Gastrocnemius medialis (tissue), 4 donors: ENCODE measurements at regions of chr6 and their contacts with region 1.

Region 1: GRCh38 chr6:154822947-154823558 is 89.8 kb downstream of the SCAF8 start:
- DNase-seq: peak in 1 of 2 donors; percentile 39
- ATAC-seq: peak; percentile 92 to 99
- H3K4me3 ChIP-seq: no peak overlapping the region
- H3K27ac ChIP-seq: peak overlapping the region; percentile 70 to 79 (median 76)
- H3K4me1 ChIP-seq: peaks cover 30 to 36% of the 10 kb centered on the region in 2 donors
- H3K27me3 ChIP-seq: no peaks in the 10 kb centered on the region
- CTCF ChIP-seq: no peak
- POLR2A ChIP-seq: no peak

Region 2: DNA sequence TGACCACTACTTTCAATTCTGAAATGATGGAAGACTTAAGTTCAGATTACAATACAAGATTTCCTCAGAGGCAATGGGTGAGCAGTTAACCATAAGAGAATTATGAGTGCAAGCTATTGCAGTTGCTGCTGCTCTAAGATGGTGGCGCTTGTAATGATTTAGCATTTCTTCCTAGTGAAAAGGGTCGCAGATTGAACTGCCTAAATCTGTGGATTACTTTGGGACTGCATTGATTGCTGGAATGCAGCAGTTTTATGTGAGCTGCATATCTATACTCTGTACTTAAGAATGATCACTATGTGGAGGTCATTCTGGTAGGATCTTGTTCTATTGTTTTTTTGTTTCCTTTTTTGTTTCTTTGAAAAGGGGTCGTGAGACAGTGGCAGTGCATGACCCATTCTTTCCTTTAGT is 84.5 kb before region 1 on chr6:
- in situ Hi-C with region 1: no loop called
- intact Hi-C with region 1: no loop called
- DNase-seq: no peak
- ATAC-seq: peak in 1 of 2 donors; percentile 46
- H3K4me3 ChIP-seq: no peak overlapping the region
- H3K27ac ChIP-seq: peak overlapping the region in 3 of 4 donors; percentile 52 to 99 (median 53)
- H3K4me1 ChIP-seq: peaks cover 85 to 86% of the 10 kb centered on the region in 2 donors
- H3K27me3 ChIP-seq: no peaks in the 10 kb centered on the region
- CTCF ChIP-seq: no peak
- POLR2A ChIP-seq: no peak

Region 3: GRCh38 chr6:154805288-154805911 is 17.7 kb before region 1 on chr6:
- in situ Hi-C with region 1: no loop called
- intact Hi-C with region 1: loop called (anchors 1 kb)
- DNase-seq: no peak
- ATAC-seq: peak in 1 of 2 donors; percentile 56
- H3K4me3 ChIP-seq: no peak overlapping the region
- H3K27ac ChIP-seq: no peak overlapping the region
- H3K4me1 ChIP-seq: peaks cover 5 to 14% of the 10 kb centered on the region in 2 donors
- H3K27me3 ChIP-seq: no peaks in the 10 kb centered on the region
- CTCF ChIP-seq: peak in 4 of 5 experiments; percentile 21 to 63 (median 49)
- POLR2A ChIP-seq: no peak

Region 4: DNA sequence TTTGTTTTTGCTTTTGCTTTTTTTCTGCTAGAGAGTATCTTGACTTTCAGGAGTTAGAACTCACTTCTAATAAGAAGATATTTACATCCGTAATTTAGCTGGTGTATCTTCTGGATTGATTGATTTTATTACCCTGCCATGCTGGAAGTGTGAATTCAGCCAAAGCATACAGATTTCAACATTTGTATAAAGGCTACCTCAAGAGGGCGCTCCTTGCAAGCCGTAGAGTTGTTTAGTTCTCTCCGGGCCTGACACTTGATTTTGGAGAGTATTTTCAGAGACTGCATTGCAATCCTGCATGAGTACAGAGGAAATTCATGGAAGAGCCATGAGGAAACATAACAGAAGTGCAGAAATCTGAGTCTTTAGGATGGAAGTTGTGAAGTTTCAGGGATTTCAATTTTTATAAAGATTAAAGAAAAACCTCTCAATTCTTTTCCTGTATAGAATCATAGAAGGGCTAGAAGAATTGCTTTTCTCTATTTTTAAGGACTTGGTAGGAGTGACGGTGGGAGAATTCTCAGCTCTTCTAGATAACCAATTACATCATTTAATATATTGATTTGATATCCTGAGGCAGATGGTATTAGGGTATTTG is 105.4 kb after region 1 on chr6:
- in situ Hi-C with region 1: no loop called
- intact Hi-C with region 1: no loop called
- DNase-seq: no peak
- ATAC-seq: peak in 1 of 2 donors; percentile 68
- H3K4me3 ChIP-seq: no peak overlapping the region
- H3K27ac ChIP-seq: no peak overlapping the region
- H3K4me1 ChIP-seq: peaks cover 0 to 8% of the 10 kb centered on the region in 2 donors
- H3K27me3 ChIP-seq: no peaks in the 10 kb centered on the region
- CTCF ChIP-seq: peak; percentile 41 to 77 (median 55)
- POLR2A ChIP-seq: no peak

Region 5: DNA sequence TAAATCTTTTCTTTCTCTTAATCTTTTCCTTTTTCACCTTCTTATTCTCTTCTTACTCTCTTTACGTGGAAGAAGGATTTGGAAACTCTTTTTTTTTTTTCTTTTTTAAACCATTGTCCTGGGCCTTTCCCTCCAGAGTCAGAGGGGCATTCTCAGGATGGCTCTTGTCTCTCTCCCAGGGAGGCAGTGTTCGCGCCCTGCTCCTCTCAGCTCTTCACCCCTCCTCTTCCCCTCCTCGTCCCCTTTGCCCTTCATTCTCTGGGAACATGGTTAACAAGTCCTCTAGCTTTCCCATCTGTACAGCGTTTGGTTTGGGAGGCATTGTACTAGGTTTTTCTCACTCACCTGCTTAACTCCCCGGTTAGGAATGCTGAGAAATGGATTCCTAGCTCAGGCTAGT is 543.3 kb after region 1 on chr6:
- in situ Hi-C with region 1: no loop called
- intact Hi-C with region 1: no loop called
- DNase-seq: no peak
- ATAC-seq: no peak
- H3K4me3 ChIP-seq: no peak overlapping the region
- H3K27ac ChIP-seq: no peak overlapping the region
- H3K4me1 ChIP-seq: no peaks in the 10 kb centered on the region
- H3K27me3 ChIP-seq: no peaks in the 10 kb centered on the region
- CTCF ChIP-seq: no peak
- POLR2A ChIP-seq: no peak